Naive thymus-derived CD4-positive, alpha-beta T cell (primary cell): ENCODE measurements at regions of chr12 and their contacts with region 1.

Region 1: DNA sequence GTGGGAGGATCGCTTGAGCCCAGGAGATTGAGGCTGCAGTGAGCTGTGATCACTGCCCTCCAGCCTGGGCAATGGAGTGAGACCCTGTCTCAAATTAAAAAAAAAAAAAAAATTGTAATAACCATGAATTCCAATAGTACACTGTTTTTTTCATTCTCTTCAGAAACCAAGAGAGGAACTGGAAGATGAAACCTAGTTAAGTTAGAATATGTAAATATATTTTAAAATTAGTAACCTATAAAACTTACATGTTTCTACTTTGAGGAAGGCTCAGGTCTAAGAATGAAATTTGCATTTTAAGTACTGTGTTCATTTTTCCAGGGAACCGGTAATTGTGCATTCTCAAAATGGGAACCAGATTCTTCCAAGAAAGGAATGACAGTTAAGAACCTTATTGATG is 18.8 kb downstream of the KNTC1 start:
- DNase-seq: no peak
- ATAC-seq: no peak
- H3K4me3 ChIP-seq: no peak overlapping the region
- H3K4me3 Mint-ChIP-seq: no peak overlapping the region
- H3K27ac ChIP-seq: no peak overlapping the region
- H3K27ac Mint-ChIP-seq: no peak overlapping the region
- H3K4me1 ChIP-seq: no peaks in the 10 kb centered on the region
- H3K4me1 Mint-ChIP-seq: peaks cover 0 to 2% (median 0%) of the 10 kb centered on the region in 7 donors
- H3K27me3 ChIP-seq: no peaks in the 10 kb centered on the region
- H3K27me3 Mint-ChIP-seq: no peaks in the 10 kb centered on the region

Region 2: GRCh38 chr12:122558745-122559641 is 13.1 kb after region 1 on chr12:
- CTCF ChIA-PET with region 1: no interaction called
- POLR2A ChIA-PET with region 1: no interaction called
- intact Hi-C with region 1: loop called in 1 of 2 experiments (anchors 2 kb)
- DNase-seq: no peak
- ATAC-seq: no peak
- H3K4me3 ChIP-seq: no peak overlapping the region
- H3K4me3 Mint-ChIP-seq: no peak overlapping the region
- H3K27ac ChIP-seq: no peak overlapping the region
- H3K27ac Mint-ChIP-seq: peak overlapping the region in 1 of 9 donors; percentile 30
- H3K4me1 ChIP-seq: no peaks in the 10 kb centered on the region
- H3K4me1 Mint-ChIP-seq: no peaks in the 10 kb centered on the region
- H3K27me3 ChIP-seq: no peaks in the 10 kb centered on the region
- H3K27me3 Mint-ChIP-seq: no peaks in the 10 kb centered on the region